ENCODE measurements at regions of chr14 and their contacts with region 1.

Region 1: GRCh38 chr14:89915114-89915878 is 39.2 kb downstream of the EFCAB11 start:
- DNase-seq: peak in 3 of 5 donors; percentile 33 to 50 (median 47)
- ATAC-seq: peak in 2 of 4 donors; percentile 61 to 80
- H3K4me3 ChIP-seq: no peak overlapping the region
- H3K27ac ChIP-seq: no peak overlapping the region
- H3K4me1 ChIP-seq: peaks cover 0 to 12% (median 0%) of the 10 kb centered on the region in 12 donors
- H3K27me3 ChIP-seq: no peaks in the 10 kb centered on the region
- CTCF ChIP-seq: peak; percentile 83 to 98 (median 96)
- POLR2A ChIP-seq: no peak

Region 2: GRCh38 chr14:89027097-89027740 is 888.1 kb before region 1 on chr14:
- intact Hi-C with region 1: loop called in 7 of 10 experiments (anchors 1 to 5 kb)
- DNase-seq: peak; percentile 22 to 82 (median 40)
- ATAC-seq: peak; percentile 41 to 90 (median 82)
- H3K4me3 ChIP-seq: peak overlapping the region; percentile 25 to 65 (median 54)
- H3K27ac ChIP-seq: no peak overlapping the region
- H3K4me1 ChIP-seq: peaks cover 0 to 27% (median 9%) of the 10 kb centered on the region in 12 donors
- H3K27me3 ChIP-seq: peaks cover 0 to 67% (median 27%) of the 10 kb centered on the region in 9 donors
- CTCF ChIP-seq: peak; percentile 55 to 93 (median 82)
- POLR2A ChIP-seq: no peak

Region 3: GRCh38 chr14:89165189-89166181 is 749.8 kb before region 1 on chr14:
- intact Hi-C with region 1: loop called in 3 of 10 experiments (anchors 10 kb)
- DNase-seq: no peak
- ATAC-seq: peak; percentile 48 to 68 (median 60)
- H3K4me3 ChIP-seq: peak overlapping the region in 10 of 12 donors; percentile 0 to 45 (median 24)
- H3K27ac ChIP-seq: peak overlapping the region in 10 of 12 donors; percentile 23 to 90 (median 41)
- H3K4me1 ChIP-seq: peaks cover 0 to 35% (median 24%) of the 10 kb centered on the region in 12 donors
- H3K27me3 ChIP-seq: no peaks in the 10 kb centered on the region
- CTCF ChIP-seq: no peak
- POLR2A ChIP-seq: no peak

Region 4: DNA sequence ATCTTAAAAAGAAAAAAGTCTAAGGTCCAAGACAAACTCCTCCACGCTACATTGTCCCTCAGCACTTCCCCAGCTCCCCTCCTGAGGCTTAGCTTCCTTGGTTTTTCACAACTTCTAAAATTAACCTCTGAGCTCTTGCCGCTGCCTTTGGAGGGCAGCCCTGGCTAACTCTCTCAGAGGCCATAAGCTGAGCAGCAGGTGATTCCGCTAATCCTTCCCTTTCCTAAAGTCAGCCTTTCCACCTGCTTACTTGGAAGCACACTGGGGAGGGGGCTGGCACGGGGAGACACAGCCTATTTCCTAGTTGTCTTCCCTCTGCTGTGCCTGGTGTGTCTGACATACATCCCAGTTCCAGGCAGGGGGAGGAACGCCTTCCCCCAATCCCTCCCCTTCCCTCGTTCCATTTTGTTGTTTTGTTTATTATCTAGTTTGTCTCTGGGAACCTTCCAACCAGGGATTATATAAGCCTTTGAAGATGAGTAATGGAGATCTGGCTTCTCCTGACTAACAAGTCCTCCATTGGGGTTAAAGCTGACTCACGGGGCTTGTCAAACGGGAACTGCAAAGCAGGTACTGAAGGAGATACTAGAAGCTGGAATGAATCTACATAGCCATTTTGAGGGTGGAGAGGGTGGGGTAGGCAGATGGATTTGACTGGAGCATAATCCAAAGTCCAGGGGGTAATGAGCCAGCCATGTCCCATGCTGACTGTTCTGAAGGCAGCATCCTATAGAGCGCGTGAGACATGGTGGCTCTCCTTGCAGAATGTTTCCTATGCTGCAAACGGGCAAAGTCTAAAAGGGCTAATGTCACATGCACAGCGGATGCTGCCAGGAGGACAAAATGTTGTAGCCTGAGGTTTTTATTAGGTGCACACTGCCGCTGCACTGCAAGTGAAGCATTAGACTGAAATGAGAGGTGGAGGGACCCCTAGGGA is 729.1 kb before region 1 on chr14:
- intact Hi-C with region 1: loop called in 2 of 10 experiments (anchors 10 kb)
- DNase-seq: no peak
- ATAC-seq: peak; percentile 61 to 76 (median 69)
- H3K4me3 ChIP-seq: no peak overlapping the region
- H3K27ac ChIP-seq: peak overlapping the region in 11 of 12 donors; percentile 50 to 80 (median 68)
- H3K4me1 ChIP-seq: peaks cover 4 to 47% (median 35%) of the 10 kb centered on the region in 12 donors
- H3K27me3 ChIP-seq: no peaks in the 10 kb centered on the region
- CTCF ChIP-seq: peak in 1 of 12 donors; percentile 25
- POLR2A ChIP-seq: no peak

Region 5: GRCh38 chr14:89430391-89431236 is 484.7 kb before region 1 on chr14:
- intact Hi-C with region 1: loop called in 1 of 10 experiments (anchors 10 kb)
- DNase-seq: no peak
- ATAC-seq: peak in 3 of 4 donors; percentile 25 to 53 (median 38)
- H3K4me3 ChIP-seq: peak overlapping the region in 11 of 12 donors; percentile 2 to 54 (median 37)
- H3K27ac ChIP-seq: peak overlapping the region; percentile 28 to 93 (median 64)
- H3K4me1 ChIP-seq: peaks cover 8 to 46% (median 36%) of the 10 kb centered on the region in 12 donors
- H3K27me3 ChIP-seq: no peaks in the 10 kb centered on the region
- CTCF ChIP-seq: no peak
- POLR2A ChIP-seq: no peak

Region 6: DNA sequence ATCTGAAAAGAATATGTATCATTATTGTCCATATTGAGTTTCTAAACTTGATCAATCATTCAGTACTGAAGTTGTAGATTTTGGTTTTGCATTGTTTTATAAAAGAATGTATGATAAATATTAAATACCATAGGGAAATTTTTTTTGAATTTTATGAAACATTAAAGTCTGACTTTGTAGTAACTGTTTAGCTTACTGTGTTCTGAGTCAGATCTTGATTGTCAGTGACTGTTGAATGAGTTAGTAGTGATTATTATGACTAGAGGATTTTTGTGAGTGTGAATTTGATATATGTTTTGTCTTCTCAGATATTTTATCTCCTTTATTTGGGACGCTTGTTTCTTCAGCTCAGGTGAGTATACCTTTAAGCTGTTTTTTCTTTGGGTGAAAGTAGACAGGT is 50.5 kb after region 1 on chr14:
- intact Hi-C with region 1: no loop called
- DNase-seq: no peak
- ATAC-seq: no peak
- H3K4me3 ChIP-seq: no peak overlapping the region
- H3K27ac ChIP-seq: no peak overlapping the region
- H3K4me1 ChIP-seq: no peaks in the 10 kb centered on the region
- H3K27me3 ChIP-seq: no peaks in the 10 kb centered on the region
- CTCF ChIP-seq: no peak
- POLR2A ChIP-seq: no peak

Measured in heart left ventricle (tissue), 16 donors.